Activated B cell treated with CpG ODN at 0.5 μM for 24 hours (primary cell): ENCODE measurements at regions of chr4 and their contacts with region 1.

Region 1: GRCh38 chr4:99563310-99564186 is at the start of gene TRMT10A:
- DNase-seq: peak; percentile 88
- ATAC-seq: peak; percentile 85
- H3K4me3 Mint-ChIP-seq: peak within 1 kb of the TSS; percentile 99
- H3K27ac Mint-ChIP-seq: peak within 1 kb of the TSS; percentile 100
- H3K4me1 Mint-ChIP-seq: peaks cover 18% of the 10 kb centered on the region
- H3K27me3 Mint-ChIP-seq: peaks cover 12% of the 10 kb centered on the region
- CTCF ChIP-seq: no peak
- total RNA-seq, gene TRMT10A: 4.9 and 10.2 TPM in 2 replicates

Region 2: DNA sequence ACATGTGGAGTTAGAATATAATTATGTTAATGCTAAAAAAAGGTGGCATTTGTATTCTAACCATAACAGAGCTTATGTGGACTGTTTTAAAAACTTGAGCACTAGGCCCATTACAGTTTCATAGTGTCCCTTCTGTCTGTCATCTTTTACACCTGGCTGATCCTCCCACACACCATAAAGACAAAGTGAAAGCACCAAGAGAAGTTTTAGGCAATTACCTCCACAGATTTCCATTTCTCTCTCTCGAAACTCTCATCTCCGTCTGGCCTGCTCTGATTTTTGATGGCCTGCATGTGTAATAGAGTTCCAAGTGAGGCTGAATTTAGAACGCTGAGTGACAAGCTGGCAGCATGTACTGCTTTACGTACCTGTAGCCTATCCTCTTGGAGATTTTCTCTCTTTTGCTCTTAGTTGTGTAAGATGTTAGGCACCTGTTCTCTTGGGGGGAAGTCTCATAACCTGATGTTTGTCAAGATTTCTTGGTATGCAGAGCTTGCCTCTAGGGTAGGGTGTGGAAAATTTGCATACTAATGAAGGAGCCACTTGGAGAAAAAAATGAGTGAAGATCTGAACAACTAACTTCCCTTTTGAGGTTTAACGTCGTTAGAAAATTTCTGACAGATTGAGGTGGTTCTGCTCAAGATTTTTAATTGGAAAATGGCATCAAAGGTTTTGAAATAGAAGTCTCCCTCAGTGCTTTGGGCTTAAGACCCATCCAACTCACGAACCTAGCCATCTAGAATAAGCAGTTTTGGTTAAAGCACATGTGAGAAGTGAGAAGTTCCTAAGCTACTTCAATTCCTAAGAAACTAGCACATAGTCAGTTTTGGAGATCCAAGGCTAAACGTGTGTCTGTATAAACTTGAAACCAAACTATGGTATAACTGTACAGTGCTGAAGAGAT is 1360.0 kb before region 1 on chr4:
- CTCF ChIA-PET with region 1: no interaction called
- POLR2A ChIA-PET with region 1: no interaction called
- intact Hi-C with region 1: loop called (anchors 5 kb)
- DNase-seq: no peak
- ATAC-seq: peak; percentile 82
- H3K4me3 Mint-ChIP-seq: peak overlapping the region; percentile 62
- H3K27ac Mint-ChIP-seq: peak overlapping the region; percentile 86
- H3K4me1 Mint-ChIP-seq: peaks cover 37% of the 10 kb centered on the region
- H3K27me3 Mint-ChIP-seq: no peaks in the 10 kb centered on the region
- CTCF ChIP-seq: no peak

Region 3: DNA sequence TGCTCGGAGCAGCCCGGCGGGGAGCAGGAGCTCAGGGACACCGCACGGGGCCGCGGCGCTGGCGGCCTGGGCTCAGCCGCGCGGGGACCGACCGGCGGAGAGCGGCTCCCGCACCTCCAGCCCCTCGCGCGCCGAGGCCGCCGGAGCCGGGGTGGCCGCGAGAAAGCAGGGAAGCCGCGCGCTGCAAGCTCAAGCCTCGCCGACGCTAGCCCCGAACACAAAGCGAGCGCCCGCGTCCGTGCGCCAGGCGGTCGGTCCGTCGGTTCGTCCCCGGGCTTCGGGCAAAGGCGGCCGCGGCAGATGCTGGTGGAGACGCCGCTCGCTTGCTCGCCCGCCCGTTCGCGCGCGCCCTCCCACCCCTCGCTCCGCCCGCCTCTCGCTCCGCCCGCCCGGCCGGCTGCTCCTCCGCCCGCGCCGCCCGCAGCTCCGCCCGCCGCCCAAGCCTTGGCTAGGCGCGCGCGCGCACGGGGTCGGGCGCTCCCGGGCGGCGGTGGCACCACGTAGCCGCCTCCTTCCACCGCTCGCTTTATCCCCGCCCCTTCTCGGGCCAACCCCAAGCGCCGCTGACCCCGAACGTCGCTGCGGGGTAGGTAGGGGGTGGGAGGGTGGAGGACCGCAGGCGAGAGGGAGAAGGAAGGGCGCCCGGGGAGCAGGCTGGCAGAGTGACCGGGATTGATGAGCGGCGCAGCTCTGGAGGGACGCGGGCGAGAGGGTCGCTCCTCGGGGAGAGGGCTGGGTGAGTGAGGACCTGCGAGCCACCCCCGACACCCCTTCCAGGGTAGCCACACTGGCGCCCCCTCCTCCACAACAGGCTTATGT is 905.1 kb before region 1 on chr4 and contains the start of gene TSPAN5:
- CTCF ChIA-PET with region 1: no interaction called
- POLR2A ChIA-PET with region 1: no interaction called
- intact Hi-C with region 1: loop called (anchors 1 kb)
- DNase-seq: peak; percentile 78
- ATAC-seq: peak; percentile 86
- H3K4me3 Mint-ChIP-seq: peak within 1 kb of the TSS; percentile 92
- H3K27ac Mint-ChIP-seq: peak within 1 kb of the TSS; percentile 68
- H3K4me1 Mint-ChIP-seq: peaks cover 51% of the 10 kb centered on the region
- H3K27me3 Mint-ChIP-seq: peaks cover 7% of the 10 kb centered on the region
- CTCF ChIP-seq: no peak
- total RNA-seq, gene TSPAN5: 1.6 and 2.7 TPM in 2 replicates

Region 4: DNA sequence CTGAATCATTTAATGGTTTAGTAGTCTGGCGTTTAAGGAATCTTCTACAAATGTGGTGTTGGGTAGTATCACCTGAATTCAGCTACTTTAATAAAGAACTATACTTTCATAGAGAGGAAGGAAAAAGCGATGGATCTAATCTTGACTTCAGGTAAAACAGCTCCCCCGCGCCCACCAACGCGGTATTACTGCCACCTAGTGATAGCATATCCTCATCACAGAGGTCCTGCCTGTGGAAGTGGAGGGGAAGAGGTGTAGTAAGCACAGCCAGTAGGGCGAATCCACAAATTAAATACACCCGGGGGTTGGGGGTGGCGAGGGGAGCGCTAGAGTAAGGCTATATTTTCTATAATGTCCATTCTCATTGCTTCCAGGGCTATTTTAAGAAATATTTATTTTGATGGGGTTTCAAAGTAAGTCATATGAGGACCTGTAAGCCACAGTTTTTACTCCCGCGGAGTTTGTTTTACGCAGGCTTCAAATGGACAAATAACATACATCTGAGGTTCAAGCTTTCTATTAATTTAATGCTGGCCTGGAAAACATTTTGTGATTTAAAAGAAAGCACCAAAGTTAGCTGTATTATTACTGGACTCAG is 244.8 kb after region 1 on chr4:
- CTCF ChIA-PET with region 1: interaction called, 38 read pairs
- POLR2A ChIA-PET with region 1: interaction called, 23 read pairs
- intact Hi-C with region 1: loop called (anchors 1 kb)
- DNase-seq: peak; percentile 45
- ATAC-seq: peak; percentile 94
- H3K4me3 Mint-ChIP-seq: peak overlapping the region; percentile 9
- H3K27ac Mint-ChIP-seq: peak overlapping the region; percentile 60
- H3K4me1 Mint-ChIP-seq: peaks cover 31% of the 10 kb centered on the region
- H3K27me3 Mint-ChIP-seq: peaks cover 10% of the 10 kb centered on the region
- CTCF ChIP-seq: peak; percentile 24

Region 5: DNA sequence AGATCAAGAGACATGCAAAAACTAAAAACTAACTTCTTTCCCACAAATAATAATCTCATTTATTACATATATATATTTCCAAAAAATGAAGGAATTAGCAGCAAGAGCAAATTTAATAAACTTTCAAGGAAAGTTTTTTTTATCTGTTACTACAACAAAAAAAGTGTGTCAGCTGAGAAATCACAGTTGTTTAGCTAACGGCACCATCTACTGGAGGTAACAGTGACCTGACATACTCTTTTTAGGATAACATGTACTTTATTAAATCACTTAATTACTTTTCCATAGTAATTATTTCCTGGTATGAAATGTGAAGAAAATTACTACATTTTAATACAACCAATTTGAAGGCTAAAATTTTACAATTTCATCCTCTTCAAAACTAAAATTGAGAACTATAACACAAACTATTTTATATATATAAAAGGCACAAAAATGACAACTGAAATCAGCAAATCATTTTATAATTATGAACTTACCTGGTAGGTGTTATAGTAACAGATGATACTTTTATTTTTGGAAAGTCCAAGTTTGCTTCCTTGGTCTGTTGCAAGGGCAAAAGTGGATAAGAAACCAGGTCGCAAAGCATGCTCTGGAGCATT is 321.6 kb after region 1 on chr4:
- CTCF ChIA-PET with region 1: interaction called, 5 read pairs
- POLR2A ChIA-PET with region 1: interaction called, 13 read pairs
- intact Hi-C with region 1: loop called (anchors 1 kb)
- DNase-seq: no peak
- ATAC-seq: no peak
- H3K4me3 Mint-ChIP-seq: no peak overlapping the region
- H3K27ac Mint-ChIP-seq: no peak overlapping the region
- H3K4me1 Mint-ChIP-seq: no peaks in the 10 kb centered on the region
- H3K27me3 Mint-ChIP-seq: no peaks in the 10 kb centered on the region
- CTCF ChIP-seq: no peak

Region 6: GRCh38 chr4:99949034-99949998 is 385.8 kb after region 1 on chr4:
- CTCF ChIA-PET with region 1: interaction called, 12 read pairs
- POLR2A ChIA-PET with region 1: interaction called, 27 read pairs
- intact Hi-C with region 1: loop called (anchors 1 kb)
- DNase-seq: peak; percentile 69
- ATAC-seq: peak; percentile 32
- H3K4me3 Mint-ChIP-seq: no peak overlapping the region
- H3K27ac Mint-ChIP-seq: no peak overlapping the region
- H3K4me1 Mint-ChIP-seq: peaks cover 31% of the 10 kb centered on the region
- H3K27me3 Mint-ChIP-seq: no peaks in the 10 kb centered on the region
- CTCF ChIP-seq: no peak